CD8-positive, alpha-beta T cell (primary cell): ENCODE measurements at regions of chr16 and their contacts with region 1.

Region 1: GRCh38 chr16:23435500-23435899 is 17.5 kb downstream of the COG7 start:
- DNase-seq: peak; percentile 29 to 77 (median 67)
- ATAC-seq: peak; percentile 97
- H3K4me3 ChIP-seq: no peak overlapping the region
- H3K4me3 Mint-ChIP-seq: no peak overlapping the region
- H3K27ac ChIP-seq: no peak overlapping the region
- H3K27ac Mint-ChIP-seq: no peak overlapping the region
- H3K4me1 ChIP-seq: no peaks in the 10 kb centered on the region
- H3K4me1 Mint-ChIP-seq: peaks cover 6% of the 10 kb centered on the region
- H3K27me3 ChIP-seq: no peaks in the 10 kb centered on the region
- H3K27me3 Mint-ChIP-seq: no peaks in the 10 kb centered on the region
- CTCF ChIP-seq: peak; percentile 67

Region 2: GRCh38 chr16:21646721-21647561 is 1788.6 kb before region 1 on chr16:
- CTCF ChIA-PET with region 1: no interaction called
- POLR2A ChIA-PET with region 1: no interaction called
- intact Hi-C with region 1: loop called in 1 of 2 experiments (anchors 5 kb)
- DNase-seq: peak; percentile 42 to 90 (median 71)
- ATAC-seq: peak; percentile 78
- H3K4me3 ChIP-seq: peak overlapping the region in 1 of 2 experiments; percentile 9
- H3K4me3 Mint-ChIP-seq: peak overlapping the region; percentile 74
- H3K27ac ChIP-seq: peak overlapping the region; percentile 58 to 85
- H3K27ac Mint-ChIP-seq: peak overlapping the region; percentile 95
- H3K4me1 ChIP-seq: peaks cover 51% of the 10 kb centered on the region
- H3K4me1 Mint-ChIP-seq: peaks cover 55% of the 10 kb centered on the region
- H3K27me3 ChIP-seq: no peaks in the 10 kb centered on the region
- H3K27me3 Mint-ChIP-seq: no peaks in the 10 kb centered on the region
- CTCF ChIP-seq: no peak

Region 3: DNA sequence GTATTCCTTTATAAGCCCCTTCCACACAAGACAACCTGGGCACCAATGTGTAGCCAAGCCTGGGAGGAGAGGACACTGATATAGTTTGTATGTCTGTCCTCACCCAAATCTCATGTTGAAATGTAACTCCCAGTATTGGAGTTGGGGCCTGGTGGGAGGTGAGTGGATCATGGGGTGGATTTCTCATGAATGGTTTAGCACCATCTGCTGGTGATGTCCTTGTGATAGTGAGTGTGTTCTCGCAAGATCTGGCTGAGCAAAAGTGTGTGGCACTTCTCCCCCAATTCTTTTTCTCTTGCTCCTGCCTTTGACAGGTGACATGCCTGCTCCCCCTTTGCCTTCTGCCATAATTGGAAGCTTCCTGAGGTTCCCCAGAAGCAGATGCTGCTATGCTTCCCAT is 422.0 kb before region 1 on chr16:
- CTCF ChIA-PET with region 1: no interaction called
- POLR2A ChIA-PET with region 1: no interaction called
- intact Hi-C with region 1: no loop called
- DNase-seq: peak in 2 of 9 experiments; percentile 2 to 4
- ATAC-seq: no peak
- H3K4me3 ChIP-seq: no peak overlapping the region
- H3K4me3 Mint-ChIP-seq: no peak overlapping the region
- H3K27ac ChIP-seq: no peak overlapping the region
- H3K27ac Mint-ChIP-seq: no peak overlapping the region
- H3K4me1 ChIP-seq: no peaks in the 10 kb centered on the region
- H3K4me1 Mint-ChIP-seq: no peaks in the 10 kb centered on the region
- H3K27me3 ChIP-seq: no peaks in the 10 kb centered on the region
- H3K27me3 Mint-ChIP-seq: peaks cover 9% of the 10 kb centered on the region
- CTCF ChIP-seq: no peak

Region 4: GRCh38 chr16:23182460-23183309 is 252.8 kb before region 1 on chr16 and contains the start of gene SCNN1G:
- CTCF ChIA-PET with region 1: interaction called, 5 read pairs
- POLR2A ChIA-PET with region 1: no interaction called
- intact Hi-C with region 1: loop called in 1 of 2 experiments (anchors 2 kb)
- DNase-seq: peak; percentile 39 to 84 (median 68)
- ATAC-seq: peak; percentile 99
- H3K4me3 ChIP-seq: peak within 1 kb of the TSS in 1 of 2 experiments; percentile 15
- H3K4me3 Mint-ChIP-seq: peak within 1 kb of the TSS; percentile 39
- H3K27ac ChIP-seq: no peak within 1 kb of the TSS
- H3K27ac Mint-ChIP-seq: no peak within 1 kb of the TSS
- H3K4me1 ChIP-seq: peaks cover 5% of the 10 kb centered on the region
- H3K4me1 Mint-ChIP-seq: peaks cover 7% of the 10 kb centered on the region
- H3K27me3 ChIP-seq: peaks cover 24 to 25% of the 10 kb centered on the region in 2 experiments
- H3K27me3 Mint-ChIP-seq: peaks cover 62% of the 10 kb centered on the region
- CTCF ChIP-seq: peak; percentile 62
- total RNA-seq, gene SCNN1G: not detected

Region 5: GRCh38 chr16:23414731-23415130 is 20.8 kb before region 1 on chr16:
- CTCF ChIA-PET with region 1: interaction called, 24 read pairs
- POLR2A ChIA-PET with region 1: no interaction called
- intact Hi-C with region 1: no loop called
- DNase-seq: no peak
- ATAC-seq: no peak
- H3K4me3 ChIP-seq: no peak overlapping the region
- H3K4me3 Mint-ChIP-seq: no peak overlapping the region
- H3K27ac ChIP-seq: no peak overlapping the region
- H3K27ac Mint-ChIP-seq: no peak overlapping the region
- H3K4me1 ChIP-seq: no peaks in the 10 kb centered on the region
- H3K4me1 Mint-ChIP-seq: no peaks in the 10 kb centered on the region
- H3K27me3 ChIP-seq: no peaks in the 10 kb centered on the region
- H3K27me3 Mint-ChIP-seq: no peaks in the 10 kb centered on the region
- CTCF ChIP-seq: no peak

Region 6: DNA sequence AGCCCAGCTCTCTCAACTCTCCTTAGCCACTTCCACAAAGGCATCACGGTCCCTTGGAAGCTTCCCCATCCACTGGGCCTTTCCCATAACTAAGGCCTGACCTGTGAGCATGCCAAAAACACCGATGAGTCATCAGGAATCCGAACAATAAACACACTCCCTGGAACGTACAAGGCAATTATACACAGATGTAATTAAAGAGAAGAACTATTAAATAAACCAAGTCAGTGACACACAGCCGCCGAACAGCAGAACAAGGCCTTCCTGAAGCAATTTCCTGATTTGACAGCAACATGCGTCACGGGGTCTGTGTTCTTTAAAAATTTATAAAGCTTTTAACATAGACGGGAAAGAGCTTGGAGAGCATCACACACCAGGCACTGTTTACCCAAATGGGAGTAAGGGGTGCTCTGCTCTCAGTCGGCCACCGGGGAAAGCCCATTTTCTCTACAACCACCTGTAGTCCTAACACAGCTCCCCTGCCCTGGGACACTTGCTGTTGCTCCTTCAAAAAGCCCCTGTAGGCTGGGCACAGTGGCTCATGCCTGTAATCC is 11.9 kb before region 1 on chr16:
- CTCF ChIA-PET with region 1: interaction called, 16 read pairs
- POLR2A ChIA-PET with region 1: no interaction called
- intact Hi-C with region 1: no loop called
- DNase-seq: no peak
- ATAC-seq: no peak
- H3K4me3 ChIP-seq: no peak overlapping the region
- H3K4me3 Mint-ChIP-seq: no peak overlapping the region
- H3K27ac ChIP-seq: no peak overlapping the region
- H3K27ac Mint-ChIP-seq: no peak overlapping the region
- H3K4me1 ChIP-seq: no peaks in the 10 kb centered on the region
- H3K4me1 Mint-ChIP-seq: no peaks in the 10 kb centered on the region
- H3K27me3 ChIP-seq: no peaks in the 10 kb centered on the region
- H3K27me3 Mint-ChIP-seq: no peaks in the 10 kb centered on the region
- CTCF ChIP-seq: no peak

Region 7: GRCh38 chr16:23510164-23510914 is 74.8 kb after region 1 on chr16 and contains the start of gene GGA2:
- CTCF ChIA-PET with region 1: interaction called, 18 read pairs
- POLR2A ChIA-PET with region 1: no interaction called
- intact Hi-C with region 1: no loop called
- DNase-seq: peak; percentile 56 to 89 (median 77)
- ATAC-seq: peak; percentile 81
- H3K4me3 ChIP-seq: peak within 1 kb of the TSS; percentile 63 to 73
- H3K4me3 Mint-ChIP-seq: peak within 1 kb of the TSS; percentile 92
- H3K27ac ChIP-seq: peak within 1 kb of the TSS; percentile 40 to 64
- H3K27ac Mint-ChIP-seq: peak within 1 kb of the TSS; percentile 88
- H3K4me1 ChIP-seq: peaks cover 42% of the 10 kb centered on the region
- H3K4me1 Mint-ChIP-seq: peaks cover 59% of the 10 kb centered on the region
- H3K27me3 ChIP-seq: no peaks in the 10 kb centered on the region
- H3K27me3 Mint-ChIP-seq: no peaks in the 10 kb centered on the region
- CTCF ChIP-seq: no peak
- total RNA-seq, gene GGA2: 220 to 239 TPM

Region 8: DNA sequence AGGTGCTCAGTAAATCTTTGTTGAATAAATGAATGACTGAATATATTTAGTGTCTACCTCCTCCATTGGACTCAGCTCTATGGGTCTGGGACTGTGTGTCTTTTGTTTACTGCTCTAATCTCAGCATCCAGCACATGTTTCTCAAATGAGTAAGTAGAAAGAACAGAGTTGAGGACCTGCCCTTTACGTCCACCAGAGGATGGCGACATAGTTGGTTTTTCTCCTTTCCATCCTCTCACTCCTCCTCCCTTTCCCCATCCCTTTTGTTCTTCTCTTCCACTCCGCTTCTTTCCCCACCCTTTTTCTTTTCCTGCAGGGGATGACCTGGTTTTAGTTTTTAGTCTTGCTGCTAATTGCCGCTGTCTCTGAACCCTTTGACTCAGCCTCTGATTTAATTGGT is 307.3 kb after region 1 on chr16:
- CTCF ChIA-PET with region 1: no interaction called
- POLR2A ChIA-PET with region 1: no interaction called
- intact Hi-C with region 1: no loop called
- DNase-seq: no peak
- ATAC-seq: no peak
- H3K4me3 ChIP-seq: no peak overlapping the region
- H3K4me3 Mint-ChIP-seq: no peak overlapping the region
- H3K27ac ChIP-seq: no peak overlapping the region
- H3K27ac Mint-ChIP-seq: no peak overlapping the region
- H3K4me1 ChIP-seq: no peaks in the 10 kb centered on the region
- H3K4me1 Mint-ChIP-seq: no peaks in the 10 kb centered on the region
- H3K27me3 ChIP-seq: peaks cover 0 to 4% of the 10 kb centered on the region in 2 experiments
- H3K27me3 Mint-ChIP-seq: peaks cover 42% of the 10 kb centered on the region
- CTCF ChIP-seq: no peak